ENCODE measurements at regions of chr12 and their contacts with region 1.

Region 1: GRCh38 chr12:59149997-59150642 is 229.8 kb upstream of the LRIG3 start:
- DNase-seq: no peak
- H3K4me3 ChIP-seq: no peak overlapping the region
- H3K27ac ChIP-seq: no peak overlapping the region
- H3K4me1 ChIP-seq: no peaks in the 10 kb centered on the region
- H3K27me3 ChIP-seq: no peaks in the 10 kb centered on the region
- CTCF ChIP-seq: peak; percentile 54 to 99 (median 95)
- EP300 ChIP-seq: no peak
- POLR2A ChIP-seq: no peak

Region 2: DNA sequence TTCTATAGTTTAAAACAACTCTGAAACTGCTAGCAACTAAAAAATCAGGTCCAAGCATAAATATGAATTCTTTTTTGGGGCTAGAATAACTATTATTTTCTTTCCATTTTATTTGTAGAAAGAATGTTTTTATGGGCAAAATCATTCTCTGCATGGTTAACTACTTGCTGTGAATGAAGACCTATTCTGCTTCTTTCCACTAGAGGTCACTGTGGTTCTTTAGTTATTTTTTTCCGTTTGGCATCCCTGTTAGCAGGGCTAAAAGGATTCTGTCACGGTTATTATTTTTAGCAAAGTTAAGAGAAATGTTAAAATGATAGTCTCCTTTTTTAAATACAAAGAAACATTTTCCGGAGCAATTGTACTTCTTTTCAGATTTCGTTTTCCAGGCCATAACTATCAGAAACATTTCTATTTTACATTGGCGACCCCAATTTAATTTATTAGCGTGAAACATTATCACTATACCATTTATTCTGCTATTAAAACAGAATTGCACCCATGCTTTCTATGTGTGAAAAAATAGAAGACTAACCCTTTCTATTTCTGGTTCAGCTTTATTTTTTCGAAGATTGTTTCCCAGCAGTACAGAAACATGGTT is 804.0 kb before region 1 on chr12:
- intact Hi-C with region 1: loop called in 2 of 4 experiments (anchors 5 to 10 kb)
- DNase-seq: no peak
- H3K4me3 ChIP-seq: no peak overlapping the region
- H3K27ac ChIP-seq: no peak overlapping the region
- H3K4me1 ChIP-seq: no peaks in the 10 kb centered on the region
- H3K27me3 ChIP-seq: no peaks in the 10 kb centered on the region
- CTCF ChIP-seq: peak; percentile 48 to 70 (median 63)
- EP300 ChIP-seq: no peak
- POLR2A ChIP-seq: no peak

Region 3: DNA sequence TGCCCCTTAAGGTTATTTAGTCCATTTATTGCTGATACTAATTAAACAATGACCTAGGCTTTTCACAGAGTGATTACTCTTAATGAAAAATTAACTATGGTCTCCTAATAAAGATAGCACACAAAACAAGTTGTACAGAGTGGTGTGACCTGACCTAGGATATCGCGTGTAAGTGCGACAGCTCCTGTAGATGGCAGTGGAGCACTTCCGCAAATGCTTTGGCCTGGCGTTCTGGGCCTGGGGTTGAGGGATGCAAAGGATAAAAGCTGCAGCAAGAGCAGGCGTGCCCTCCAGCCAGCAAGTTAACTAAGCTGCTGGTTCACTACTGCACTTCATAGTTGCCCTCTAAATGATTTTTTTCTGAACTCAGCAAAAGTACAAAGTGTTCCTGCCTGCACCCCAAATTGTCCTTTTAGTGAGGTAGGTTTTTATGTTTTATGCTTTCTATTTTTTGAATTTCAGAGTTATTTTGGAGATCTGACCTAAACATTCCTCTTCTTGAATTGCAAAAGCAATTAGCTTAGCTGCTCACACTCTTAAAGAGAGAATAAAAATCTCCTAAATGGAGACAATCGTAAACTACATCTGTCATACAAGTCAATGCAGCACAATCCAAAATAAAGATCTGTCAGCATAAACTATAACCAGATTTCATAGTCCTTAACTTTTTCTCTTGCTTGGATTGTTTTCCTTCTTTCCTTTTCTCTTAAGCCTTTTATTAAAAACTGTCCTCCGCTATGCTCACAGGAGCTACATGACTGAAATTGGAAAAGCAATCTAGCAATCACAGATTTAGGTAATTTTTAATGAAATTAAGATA is 609.4 kb before region 1 on chr12:
- intact Hi-C with region 1: loop called in 1 of 4 experiments (anchors 5 kb)
- DNase-seq: peak; percentile 69 to 82 (median 75)
- H3K4me3 ChIP-seq: no peak overlapping the region
- H3K27ac ChIP-seq: no peak overlapping the region
- H3K4me1 ChIP-seq: no peaks in the 10 kb centered on the region
- H3K27me3 ChIP-seq: no peaks in the 10 kb centered on the region
- CTCF ChIP-seq: peak in 2 of 3 donors; percentile 49 to 62
- EP300 ChIP-seq: no peak
- POLR2A ChIP-seq: no peak

Region 4: DNA sequence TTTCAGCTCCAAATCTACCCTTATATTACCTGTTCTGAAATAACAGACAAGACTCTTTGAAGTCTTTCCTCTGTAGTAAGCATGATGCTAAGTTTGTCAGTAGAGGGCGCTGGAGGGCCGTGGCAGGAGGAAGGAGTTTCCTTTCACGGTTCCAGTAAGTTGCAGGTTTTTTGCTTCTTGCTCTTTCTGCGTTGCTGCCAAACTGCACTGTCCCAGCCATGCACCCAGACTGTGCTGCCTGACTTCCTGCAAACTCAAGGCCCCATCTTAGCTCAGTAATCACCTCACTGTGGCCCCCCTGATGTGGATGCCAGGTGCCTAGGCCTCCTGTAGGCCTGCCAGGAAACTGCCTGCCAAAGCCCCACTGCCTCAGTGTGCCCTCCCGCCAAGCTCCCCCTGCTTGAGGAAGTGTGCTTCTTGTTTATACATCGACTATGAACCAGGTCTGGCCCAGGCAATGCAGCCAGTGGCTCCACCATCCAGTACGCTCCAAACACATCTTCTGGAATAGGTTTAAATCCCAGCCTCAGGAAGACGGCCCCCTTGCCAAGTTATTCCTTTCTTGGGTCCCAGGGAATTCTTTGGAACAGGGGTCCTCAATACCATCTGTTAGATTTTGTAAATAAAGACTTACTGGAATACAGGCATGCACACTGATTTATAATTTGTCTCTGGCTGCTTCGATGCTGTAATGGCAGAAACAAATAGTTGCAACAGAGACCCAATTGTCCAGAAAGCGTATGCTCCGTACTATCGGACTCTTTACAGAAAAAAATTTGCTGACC is 36.1 kb before region 1 on chr12:
- intact Hi-C with region 1: loop called in 3 of 4 experiments (anchors 5 kb)
- DNase-seq: peak; percentile 60 to 85 (median 81)
- H3K4me3 ChIP-seq: no peak overlapping the region
- H3K27ac ChIP-seq: no peak overlapping the region
- H3K4me1 ChIP-seq: no peaks in the 10 kb centered on the region
- H3K27me3 ChIP-seq: no peaks in the 10 kb centered on the region
- CTCF ChIP-seq: peak; percentile 43 to 59 (median 59)
- EP300 ChIP-seq: no peak
- POLR2A ChIP-seq: no peak

Region 5: GRCh38 chr12:59194794-59195193 is 44.7 kb after region 1 on chr12:
- intact Hi-C with region 1: no loop called
- DNase-seq: no peak
- H3K4me3 ChIP-seq: no peak overlapping the region
- H3K27ac ChIP-seq: no peak overlapping the region
- H3K4me1 ChIP-seq: no peaks in the 10 kb centered on the region
- H3K27me3 ChIP-seq: no peaks in the 10 kb centered on the region
- CTCF ChIP-seq: no peak
- EP300 ChIP-seq: no peak
- POLR2A ChIP-seq: no peak

Region 6: GRCh38 chr12:59517522-59517921 is 367.4 kb after region 1 on chr12:
- intact Hi-C with region 1: no loop called
- DNase-seq: no peak
- H3K4me3 ChIP-seq: no peak overlapping the region
- H3K27ac ChIP-seq: no peak overlapping the region
- H3K4me1 ChIP-seq: no peaks in the 10 kb centered on the region
- H3K27me3 ChIP-seq: no peaks in the 10 kb centered on the region
- CTCF ChIP-seq: no peak
- EP300 ChIP-seq: no peak
- POLR2A ChIP-seq: no peak